OCI-LY7 (cell line): ENCODE measurements at regions of chr1 and their contacts with region 1.

Region 1: DNA sequence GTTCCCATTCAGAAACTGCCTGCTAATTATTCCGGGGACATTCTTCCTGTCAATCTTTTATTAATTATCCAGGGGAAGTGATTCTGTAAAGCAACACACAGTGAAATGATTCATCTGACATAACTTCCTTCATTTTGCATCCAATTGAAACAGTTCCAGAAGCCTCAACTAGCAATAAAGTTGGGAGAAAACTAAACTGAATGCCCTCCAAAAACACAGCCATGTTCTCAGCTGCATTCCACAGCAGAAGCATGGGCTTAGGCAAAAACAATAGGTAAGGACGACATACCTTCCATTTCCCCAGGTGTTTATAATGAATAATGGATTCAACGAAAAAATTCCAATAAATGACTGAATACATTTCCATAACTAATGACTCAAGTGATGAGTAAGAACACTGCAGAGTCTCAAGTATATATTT is 36.9 kb upstream of the TARBP1 start:
- DNase-seq: no peak
- H3K4me3 ChIP-seq: no peak overlapping the region
- H3K27ac ChIP-seq: no peak overlapping the region
- H3K4me1 ChIP-seq: peaks cover 51% of the 10 kb centered on the region
- CTCF ChIP-seq: no peak

Region 2: GRCh38 chr1:234582681-234583301 is 67.0 kb after region 1 on chr1:
- CTCF ChIA-PET with region 1: interaction called, 10 read pairs
- POLR2A ChIA-PET with region 1: interaction called, 3 read pairs
- intact Hi-C with region 1: no loop called
- DNase-seq: no peak
- H3K4me3 ChIP-seq: no peak overlapping the region
- H3K27ac ChIP-seq: no peak overlapping the region
- H3K4me1 ChIP-seq: no peaks in the 10 kb centered on the region
- CTCF ChIP-seq: no peak

Region 3: DNA sequence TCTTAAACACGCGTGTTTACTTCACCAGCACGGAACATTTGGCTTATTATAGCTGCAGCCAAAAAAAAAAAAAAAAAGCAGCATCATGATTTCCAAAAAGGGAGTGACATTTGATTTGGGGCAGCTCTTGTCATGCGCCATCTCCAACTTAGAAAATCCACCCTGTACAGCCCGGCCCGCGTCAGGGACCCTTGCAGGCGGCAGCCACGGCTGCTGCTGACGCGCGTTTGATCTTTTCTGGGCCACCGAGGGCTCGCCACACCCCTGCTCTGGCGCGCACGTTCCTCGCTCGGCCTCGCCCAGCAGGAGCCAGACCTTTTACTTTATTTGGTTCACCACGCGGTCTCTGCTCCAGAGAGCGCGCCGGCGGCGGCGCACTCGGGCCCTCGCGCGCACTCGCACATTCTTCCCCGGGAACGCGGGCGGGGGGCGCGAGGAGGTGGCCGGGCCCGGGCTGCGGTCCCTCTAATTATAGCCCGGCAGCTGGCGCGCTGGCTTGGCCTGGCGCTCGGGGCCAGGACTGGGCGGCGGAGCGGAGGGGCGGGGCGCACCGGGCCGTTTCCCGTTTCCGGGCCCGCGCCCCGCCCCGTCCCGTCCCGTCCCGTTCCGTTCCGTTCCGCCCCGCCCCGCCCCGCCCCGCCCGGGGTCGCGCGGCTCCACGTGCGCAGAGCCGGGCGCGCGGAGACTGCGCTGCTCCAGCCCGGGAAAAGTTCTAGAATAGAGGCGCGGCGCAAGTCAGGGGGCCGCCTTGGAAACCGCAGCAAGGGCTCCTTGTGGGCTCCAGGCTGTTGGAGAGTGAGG is 84.0 kb after region 1 on chr1:
- CTCF ChIA-PET with region 1: no interaction called
- POLR2A ChIA-PET with region 1: interaction called, 14 read pairs
- intact Hi-C with region 1: no loop called
- DNase-seq: peak; percentile 88
- H3K4me3 ChIP-seq: peak overlapping the region; percentile 69
- H3K27ac ChIP-seq: peak overlapping the region; percentile 93
- H3K4me1 ChIP-seq: peaks cover 69% of the 10 kb centered on the region
- CTCF ChIP-seq: 0 out of 2 replicates have a peak, but pooled peaks have one; percentile 15

Region 4: GRCh38 chr1:234755449-234755863 is 239.6 kb after region 1 on chr1:
- CTCF ChIA-PET with region 1: no interaction called
- POLR2A ChIA-PET with region 1: no interaction called
- intact Hi-C with region 1: no loop called
- DNase-seq: no peak
- H3K4me3 ChIP-seq: no peak overlapping the region
- H3K27ac ChIP-seq: no peak overlapping the region
- H3K4me1 ChIP-seq: peaks cover 3% of the 10 kb centered on the region
- CTCF ChIP-seq: no peak